ENCODE measurements at regions of chr11 and their contacts with region 1.

Region 1: DNA sequence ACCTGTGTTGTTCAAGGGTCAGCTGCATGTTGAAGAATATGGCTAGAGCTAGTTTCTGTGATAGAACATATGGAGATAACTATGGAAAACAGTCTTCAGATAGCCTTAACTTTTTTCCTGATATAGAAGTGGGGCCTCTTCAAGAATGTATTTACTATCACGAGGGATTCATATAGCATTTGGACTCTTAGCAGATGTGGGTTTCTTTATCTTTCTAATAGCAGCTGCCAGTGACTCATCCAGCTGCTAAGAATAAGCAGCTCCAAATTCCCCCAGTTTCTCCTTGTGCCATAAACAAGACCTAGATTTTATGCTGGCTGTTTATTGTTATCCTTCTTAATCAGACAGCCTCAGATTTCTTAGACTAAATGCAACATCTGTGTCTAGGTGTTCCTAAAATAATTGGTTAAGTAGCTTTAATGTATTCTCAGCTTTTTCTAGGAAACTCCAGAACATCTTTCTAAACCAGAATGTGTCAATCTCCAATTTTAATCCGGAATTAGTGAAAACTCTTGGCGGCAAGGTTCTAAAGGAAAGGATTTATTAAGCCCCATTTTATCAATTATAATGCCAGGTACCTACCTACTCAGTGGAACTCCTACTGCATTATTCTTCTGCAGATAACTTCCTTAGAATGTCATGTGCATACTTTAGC is 119.8 kb downstream of the CSTPP1 start:
- DNase-seq: peak; percentile 94
- ATAC-seq: peak; percentile 94
- H3K4me3 ChIP-seq: no peak overlapping the region
- H3K27ac ChIP-seq: no peak overlapping the region
- H3K4me1 ChIP-seq: peaks cover 5% of the 10 kb centered on the region
- H3K27me3 ChIP-seq: no peaks in the 10 kb centered on the region
- CTCF ChIP-seq: no peak
- POLR2A ChIP-seq: no peak
- RAD21 ChIP-seq: no peak

Region 2: DNA sequence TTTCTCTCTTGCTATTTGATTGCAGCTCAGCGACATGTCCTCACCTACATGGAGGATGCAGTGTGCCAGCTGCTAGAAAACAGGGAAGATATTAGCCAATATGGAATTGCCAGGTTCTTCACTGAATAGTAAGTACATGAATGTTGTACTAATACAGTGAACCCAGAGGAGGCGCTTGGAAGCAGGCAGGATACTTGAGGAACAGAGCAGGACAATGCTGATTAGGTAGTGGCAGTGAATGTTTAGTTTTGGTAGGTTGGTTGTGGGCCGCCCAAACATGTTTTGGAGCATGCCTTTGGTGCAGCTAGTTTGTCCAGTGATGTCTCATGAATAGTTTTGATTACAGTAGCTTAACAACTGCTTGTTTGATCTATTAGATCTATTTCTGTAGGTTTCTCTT is 69.2 kb before region 1 on chr11:
- CTCF ChIA-PET with region 1: no interaction called
- POLR2A ChIA-PET with region 1: no interaction called
- dilution Hi-C with region 1: no loop called
- in situ Hi-C with region 1: no loop called
- intact Hi-C with region 1: no loop called
- DNase-seq: no peak
- ATAC-seq: no peak
- H3K4me3 ChIP-seq: no peak overlapping the region
- H3K27ac ChIP-seq: no peak overlapping the region
- H3K4me1 ChIP-seq: peaks cover 5% of the 10 kb centered on the region; the same call in 1 of the 2 replicates
- H3K27me3 ChIP-seq: no peaks in the 10 kb centered on the region
- CTCF ChIP-seq: no peak
- POLR2A ChIP-seq: no peak
- RAD21 ChIP-seq: no peak

Region 3: GRCh38 chr11:47093541-47093940 is 37.2 kb after region 1 on chr11:
- CTCF ChIA-PET with region 1: no interaction called
- POLR2A ChIA-PET with region 1: no interaction called
- dilution Hi-C with region 1: no loop called
- in situ Hi-C with region 1: no loop called
- intact Hi-C with region 1: loop called (anchors 5 kb)
- DNase-seq: no peak
- ATAC-seq: no peak
- H3K4me3 ChIP-seq: no peak overlapping the region
- H3K27ac ChIP-seq: no peak overlapping the region
- H3K4me1 ChIP-seq: no peaks in the 10 kb centered on the region
- H3K27me3 ChIP-seq: no peaks in the 10 kb centered on the region
- CTCF ChIP-seq: no peak
- POLR2A ChIP-seq: no peak
- RAD21 ChIP-seq: no peak

Region 4: DNA sequence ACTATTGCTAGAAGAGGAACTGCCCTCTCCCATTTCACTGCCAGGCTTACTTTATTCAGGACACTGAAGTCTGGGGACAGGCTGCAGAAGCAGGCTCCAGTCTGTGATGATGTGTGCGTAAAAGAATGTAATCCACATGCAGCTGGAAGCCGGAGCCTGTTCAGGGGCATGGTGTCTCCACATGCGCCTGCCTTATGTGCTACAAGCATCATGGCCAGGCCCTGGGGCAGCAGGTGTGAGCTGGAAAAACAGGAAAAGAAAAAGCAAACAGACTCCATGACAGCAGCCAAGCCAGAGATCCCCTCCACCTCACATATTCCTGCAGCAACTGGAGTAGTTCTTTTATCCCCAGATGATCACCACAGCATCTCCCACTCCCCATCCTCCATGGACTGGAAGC is 86.9 kb after region 1 on chr11:
- CTCF ChIA-PET with region 1: no interaction called
- POLR2A ChIA-PET with region 1: no interaction called
- dilution Hi-C with region 1: no loop called
- in situ Hi-C with region 1: no loop called
- intact Hi-C with region 1: no loop called
- DNase-seq: peak; percentile 97
- ATAC-seq: peak; percentile 100
- H3K4me3 ChIP-seq: no peak overlapping the region
- H3K27ac ChIP-seq: peak overlapping the region; percentile 61; the same call in 1 of the 2 replicates
- H3K4me1 ChIP-seq: peaks cover 10% of the 10 kb centered on the region
- H3K27me3 ChIP-seq: no peaks in the 10 kb centered on the region
- CTCF ChIP-seq: no peak
- POLR2A ChIP-seq: no peak
- RAD21 ChIP-seq: peak; percentile 28; the same call in 1 of the 2 replicates